Activated naive CD4-positive, alpha-beta T cell treated with anti-CD3 and anti-CD28 coated beads for 36 hours (primary cell): ENCODE measurements at regions of chr2 and their contacts with region 1.

Region 1: GRCh38 chr2:101328474-101329007 is 20.0 kb upstream of the RNF149 start:
- DNase-seq: peak; percentile 60
- H3K4me3 Mint-ChIP-seq: no peak overlapping the region
- H3K27ac Mint-ChIP-seq: no peak overlapping the region
- H3K4me1 Mint-ChIP-seq: peaks cover 18% of the 10 kb centered on the region
- H3K27me3 Mint-ChIP-seq: no peaks in the 10 kb centered on the region

Region 2: GRCh38 chr2:101272045-101272784 is 56.3 kb before region 1 on chr2:
- CTCF ChIA-PET with region 1: interaction called, 3 read pairs
- intact Hi-C with region 1: loop called (anchors 1 kb)
- DNase-seq: no peak
- H3K4me3 Mint-ChIP-seq: no peak overlapping the region
- H3K27ac Mint-ChIP-seq: peak overlapping the region; percentile 25
- H3K4me1 Mint-ChIP-seq: peaks cover 38% of the 10 kb centered on the region
- H3K27me3 Mint-ChIP-seq: no peaks in the 10 kb centered on the region